ENCODE measurements at regions of chr7 and their contacts with region 1.

Region 1: DNA sequence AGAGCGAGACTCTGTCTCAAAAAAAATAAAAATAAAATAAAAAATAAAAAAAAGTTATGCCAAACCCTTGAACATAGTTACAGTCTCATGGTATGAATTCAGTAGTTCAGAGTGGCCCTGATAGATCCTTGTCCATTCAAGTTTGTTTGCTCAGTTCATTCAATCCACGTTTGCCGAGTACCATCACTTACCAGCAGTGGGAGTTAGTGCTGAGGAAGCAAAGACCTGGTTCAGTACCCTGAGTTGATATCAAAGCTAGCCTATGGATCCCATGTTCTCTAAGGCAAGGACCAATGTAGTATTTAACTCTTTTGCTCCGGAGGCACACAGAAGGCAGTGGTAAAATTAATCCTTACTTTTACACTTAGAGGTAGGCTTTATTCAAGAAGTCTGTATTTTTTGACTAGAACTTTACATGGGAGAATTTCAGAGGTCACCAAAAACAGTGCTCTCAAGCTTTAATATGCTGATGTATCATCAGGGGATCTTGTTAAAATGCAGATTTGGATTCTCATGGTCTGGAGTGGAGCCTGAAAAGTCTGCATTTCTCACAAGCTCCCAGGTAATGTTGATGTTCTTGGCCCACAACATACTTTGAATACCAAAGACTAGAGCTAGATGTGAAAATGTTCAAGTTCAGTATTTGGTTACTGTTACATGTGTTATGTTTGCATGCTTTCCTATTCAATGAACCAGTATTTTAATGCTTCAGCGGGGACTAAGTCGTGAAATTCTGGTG is 38.1 kb upstream of the HBP1 start:
- DNase-seq: no peak
- ATAC-seq: no peak
- H3K4me3 ChIP-seq: no peak overlapping the region
- H3K4me3 Mint-ChIP-seq: no peak overlapping the region
- H3K27ac ChIP-seq: no peak overlapping the region
- H3K27ac Mint-ChIP-seq: no peak overlapping the region
- H3K4me1 ChIP-seq: peaks cover 9% of the 10 kb centered on the region in 2 experiments
- H3K4me1 Mint-ChIP-seq: peaks cover 17 to 24% (median 17%) of the 10 kb centered on the region in 3 donors
- H3K27me3 ChIP-seq: no peaks in the 10 kb centered on the region
- H3K27me3 Mint-ChIP-seq: no peaks in the 10 kb centered on the region

Region 2: GRCh38 chr7:107173691-107174406 is 43.2 kb after region 1 on chr7:
- CTCF ChIA-PET with region 1: interaction called in 1 of 2 experiments, 3 read pairs
- POLR2A ChIA-PET with region 1: interaction called, 5 to 10 read pairs
- DNase-seq: no peak
- ATAC-seq: no peak
- H3K4me3 ChIP-seq: no peak overlapping the region
- H3K4me3 Mint-ChIP-seq: peak overlapping the region; percentile 26 to 59 (median 40)
- H3K27ac ChIP-seq: no peak overlapping the region
- H3K27ac Mint-ChIP-seq: peak overlapping the region; percentile 13 to 46
- H3K4me1 ChIP-seq: peaks cover 22 to 27% of the 10 kb centered on the region in 2 experiments
- H3K4me1 Mint-ChIP-seq: peaks cover 68 to 74% (median 73%) of the 10 kb centered on the region in 3 donors
- H3K27me3 ChIP-seq: no peaks in the 10 kb centered on the region
- H3K27me3 Mint-ChIP-seq: no peaks in the 10 kb centered on the region

Region 3: GRCh38 chr7:107224374-107225223 is 93.9 kb after region 1 on chr7:
- CTCF ChIA-PET with region 1: no interaction called
- POLR2A ChIA-PET with region 1: no interaction called
- DNase-seq: no peak
- ATAC-seq: no peak
- H3K4me3 ChIP-seq: no peak overlapping the region
- H3K4me3 Mint-ChIP-seq: no peak overlapping the region
- H3K27ac ChIP-seq: no peak overlapping the region
- H3K27ac Mint-ChIP-seq: no peak overlapping the region
- H3K4me1 ChIP-seq: no peaks in the 10 kb centered on the region
- H3K4me1 Mint-ChIP-seq: no peaks in the 10 kb centered on the region
- H3K27me3 ChIP-seq: no peaks in the 10 kb centered on the region
- H3K27me3 Mint-ChIP-seq: no peaks in the 10 kb centered on the region

Measured in T-cell (primary cell).